B cell (primary cell): ENCODE measurements at regions of chr5 and their contacts with region 1.

Region 1: DNA sequence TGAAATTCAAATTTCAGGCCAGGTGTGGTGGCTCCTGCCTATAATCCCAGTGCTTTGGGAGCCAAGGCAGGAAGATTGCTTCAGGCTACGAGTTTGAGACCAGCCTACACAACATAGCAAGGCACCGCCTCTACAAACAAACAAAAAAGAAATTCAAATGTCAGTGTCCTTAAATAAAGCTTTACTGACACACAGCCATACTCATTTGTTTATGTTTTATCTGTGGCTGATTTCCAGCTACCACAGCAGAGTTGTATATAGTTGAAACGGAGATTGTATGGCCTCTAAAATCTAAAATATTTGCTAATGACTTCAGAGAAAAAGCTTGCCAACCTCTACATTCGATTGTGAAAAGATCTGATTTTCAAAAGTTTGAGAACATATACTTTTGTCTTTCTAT is 15.4 kb downstream of the SHLD3 start:
- DNase-seq: no peak
- ATAC-seq: no peak
- H3K4me3 ChIP-seq: no peak overlapping the region
- H3K4me3 Mint-ChIP-seq: no peak overlapping the region
- H3K27ac ChIP-seq: no peak overlapping the region
- H3K27ac Mint-ChIP-seq: no peak overlapping the region
- H3K4me1 ChIP-seq: no peaks in the 10 kb centered on the region
- H3K4me1 Mint-ChIP-seq: no peaks in the 10 kb centered on the region
- H3K27me3 ChIP-seq: no peaks in the 10 kb centered on the region
- H3K27me3 Mint-ChIP-seq: no peaks in the 10 kb centered on the region
- CTCF ChIP-seq: no peak

Region 2: GRCh38 chr5:65611524-65611923 is 28.7 kb before region 1 on chr5:
- CTCF ChIA-PET with region 1: interaction called, 4 read pairs
- POLR2A ChIA-PET with region 1: no interaction called
- intact Hi-C with region 1: loop called (anchors 2 kb)
- DNase-seq: no peak
- ATAC-seq: no peak
- H3K4me3 ChIP-seq: no peak overlapping the region
- H3K4me3 Mint-ChIP-seq: no peak overlapping the region
- H3K27ac ChIP-seq: no peak overlapping the region
- H3K27ac Mint-ChIP-seq: no peak overlapping the region
- H3K4me1 ChIP-seq: no peaks in the 10 kb centered on the region
- H3K4me1 Mint-ChIP-seq: no peaks in the 10 kb centered on the region
- H3K27me3 ChIP-seq: no peaks in the 10 kb centered on the region
- H3K27me3 Mint-ChIP-seq: no peaks in the 10 kb centered on the region
- CTCF ChIP-seq: no peak

Region 3: DNA sequence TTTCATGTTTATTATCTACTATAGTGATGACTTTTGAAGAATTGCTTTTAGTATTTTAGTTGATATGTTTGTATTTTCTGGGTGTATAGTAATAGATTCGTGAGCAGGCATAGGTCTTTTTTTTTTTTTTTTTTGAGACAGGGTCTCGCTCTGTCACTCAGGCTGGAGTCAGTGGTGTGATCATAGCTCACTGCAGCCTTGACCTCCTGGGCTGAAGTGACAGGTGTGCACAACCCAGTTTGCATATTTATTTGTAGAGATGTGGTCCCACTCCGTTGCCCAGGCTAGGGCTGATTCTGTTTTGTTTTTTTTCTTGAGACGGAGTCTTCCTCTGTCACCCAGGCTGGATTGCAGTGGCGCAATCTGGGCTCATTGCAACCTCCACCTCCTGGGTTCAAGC is 298.0 kb after region 1 on chr5:
- CTCF ChIA-PET with region 1: no interaction called
- POLR2A ChIA-PET with region 1: no interaction called
- intact Hi-C with region 1: no loop called
- DNase-seq: peak; percentile 57
- ATAC-seq: peak; percentile 83
- H3K4me3 ChIP-seq: no peak overlapping the region
- H3K4me3 Mint-ChIP-seq: peak overlapping the region; percentile 44
- H3K27ac ChIP-seq: peak overlapping the region in 1 of 2 donors; percentile 34
- H3K27ac Mint-ChIP-seq: peak overlapping the region; percentile 21
- H3K4me1 ChIP-seq: peaks cover 24 to 37% of the 10 kb centered on the region in 2 donors
- H3K4me1 Mint-ChIP-seq: peaks cover 60% of the 10 kb centered on the region
- H3K27me3 ChIP-seq: no peaks in the 10 kb centered on the region
- H3K27me3 Mint-ChIP-seq: no peaks in the 10 kb centered on the region
- CTCF ChIP-seq: no peak

Region 4: DNA sequence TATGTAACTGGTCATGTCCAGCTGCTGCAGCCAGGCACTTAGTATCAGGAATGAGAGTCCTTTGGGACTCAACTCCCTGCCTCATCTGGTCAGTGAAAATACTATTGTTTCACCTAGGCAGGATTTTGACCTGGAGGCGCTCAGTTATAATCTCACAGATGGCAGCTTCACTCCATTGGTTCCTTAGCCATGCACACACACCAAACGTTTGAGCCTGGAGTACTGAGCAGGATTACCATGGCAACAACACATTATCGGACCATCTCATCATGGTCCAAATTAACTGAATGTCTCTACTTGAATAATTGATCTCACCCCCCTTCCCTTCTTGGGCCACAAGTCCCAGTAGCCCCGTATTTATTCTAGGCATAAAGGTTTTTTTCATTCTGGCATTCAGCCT is 488.9 kb after region 1 on chr5:
- CTCF ChIA-PET with region 1: no interaction called
- POLR2A ChIA-PET with region 1: no interaction called
- intact Hi-C with region 1: no loop called
- DNase-seq: no peak
- ATAC-seq: no peak
- H3K4me3 ChIP-seq: no peak overlapping the region
- H3K4me3 Mint-ChIP-seq: no peak overlapping the region
- H3K27ac ChIP-seq: no peak overlapping the region
- H3K27ac Mint-ChIP-seq: no peak overlapping the region
- H3K4me1 ChIP-seq: no peaks in the 10 kb centered on the region
- H3K4me1 Mint-ChIP-seq: no peaks in the 10 kb centered on the region
- H3K27me3 ChIP-seq: no peaks in the 10 kb centered on the region
- H3K27me3 Mint-ChIP-seq: no peaks in the 10 kb centered on the region
- CTCF ChIP-seq: no peak